ENCODE measurements at regions of chr12 and their contacts with region 1.

Region 1: GRCh38 chr12:94101738-94102660 is 46.4 kb upstream of the PLXNC1 start:
- DNase-seq: peak; percentile 74 to 93
- ATAC-seq: peak; percentile 89 to 90 (median 89)
- H3K4me3 ChIP-seq: peak overlapping the region; percentile 84
- H3K4me3 Mint-ChIP-seq: peak overlapping the region; percentile 88
- H3K27ac ChIP-seq: peak overlapping the region; percentile 21
- H3K27ac Mint-ChIP-seq: peak overlapping the region in 1 of 2 donors; percentile 69
- H3K4me1 ChIP-seq: peaks cover 15% of the 10 kb centered on the region
- H3K4me1 Mint-ChIP-seq: peaks cover 5% of the 10 kb centered on the region in 2 donors
- H3K27me3 ChIP-seq: peaks cover 3% of the 10 kb centered on the region
- H3K27me3 Mint-ChIP-seq: peaks cover 8 to 31% of the 10 kb centered on the region in 2 donors
- CTCF ChIP-seq: peak; percentile 67

Region 2: DNA sequence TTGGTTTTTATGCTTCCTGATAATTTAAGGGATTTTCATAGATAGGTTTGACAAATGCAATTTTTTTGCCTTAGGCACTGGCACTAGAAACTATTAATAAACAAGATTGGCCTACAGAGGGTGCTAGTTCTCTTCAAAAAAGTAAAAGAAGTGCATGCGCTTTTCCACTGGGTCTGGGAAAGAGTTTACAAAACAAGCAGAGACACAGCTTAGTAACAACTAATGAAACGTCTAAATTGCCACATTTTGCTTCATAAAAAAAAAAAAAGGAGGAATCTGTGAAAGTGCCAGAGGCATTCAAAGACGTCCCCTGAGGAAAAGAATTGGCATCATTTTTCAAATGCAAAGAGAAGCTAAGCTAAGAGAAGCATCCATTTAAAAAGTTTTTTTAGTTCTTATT is 1114.6 kb before region 1 on chr12:
- intact Hi-C with region 1: loop called (anchors 5 kb)
- DNase-seq: peak in 1 of 2 donors; percentile 72
- ATAC-seq: peak; percentile 47 to 69 (median 61)
- H3K4me3 ChIP-seq: no peak overlapping the region
- H3K4me3 Mint-ChIP-seq: no peak overlapping the region
- H3K27ac ChIP-seq: no peak overlapping the region
- H3K27ac Mint-ChIP-seq: no peak overlapping the region
- H3K4me1 ChIP-seq: peaks cover 5% of the 10 kb centered on the region
- H3K4me1 Mint-ChIP-seq: peaks cover 0 to 4% of the 10 kb centered on the region in 2 donors
- H3K27me3 ChIP-seq: no peaks in the 10 kb centered on the region
- H3K27me3 Mint-ChIP-seq: peaks cover 6 to 16% of the 10 kb centered on the region in 2 donors
- CTCF ChIP-seq: peak; percentile 52

Region 3: GRCh38 chr12:93521225-93522080 is 580.5 kb before region 1 on chr12:
- intact Hi-C with region 1: loop called (anchors 5 kb)
- DNase-seq: peak in 1 of 2 donors; percentile 6
- ATAC-seq: peak; percentile 27 to 80 (median 46)
- H3K4me3 ChIP-seq: no peak overlapping the region
- H3K4me3 Mint-ChIP-seq: peak overlapping the region; percentile 17
- H3K27ac ChIP-seq: no peak overlapping the region
- H3K27ac Mint-ChIP-seq: peak overlapping the region in 1 of 2 donors; percentile 72
- H3K4me1 ChIP-seq: peaks cover 3% of the 10 kb centered on the region
- H3K4me1 Mint-ChIP-seq: peaks cover 5 to 8% of the 10 kb centered on the region in 2 donors
- H3K27me3 ChIP-seq: no peaks in the 10 kb centered on the region
- H3K27me3 Mint-ChIP-seq: no peaks in the 10 kb centered on the region
- CTCF ChIP-seq: no peak

Region 4: DNA sequence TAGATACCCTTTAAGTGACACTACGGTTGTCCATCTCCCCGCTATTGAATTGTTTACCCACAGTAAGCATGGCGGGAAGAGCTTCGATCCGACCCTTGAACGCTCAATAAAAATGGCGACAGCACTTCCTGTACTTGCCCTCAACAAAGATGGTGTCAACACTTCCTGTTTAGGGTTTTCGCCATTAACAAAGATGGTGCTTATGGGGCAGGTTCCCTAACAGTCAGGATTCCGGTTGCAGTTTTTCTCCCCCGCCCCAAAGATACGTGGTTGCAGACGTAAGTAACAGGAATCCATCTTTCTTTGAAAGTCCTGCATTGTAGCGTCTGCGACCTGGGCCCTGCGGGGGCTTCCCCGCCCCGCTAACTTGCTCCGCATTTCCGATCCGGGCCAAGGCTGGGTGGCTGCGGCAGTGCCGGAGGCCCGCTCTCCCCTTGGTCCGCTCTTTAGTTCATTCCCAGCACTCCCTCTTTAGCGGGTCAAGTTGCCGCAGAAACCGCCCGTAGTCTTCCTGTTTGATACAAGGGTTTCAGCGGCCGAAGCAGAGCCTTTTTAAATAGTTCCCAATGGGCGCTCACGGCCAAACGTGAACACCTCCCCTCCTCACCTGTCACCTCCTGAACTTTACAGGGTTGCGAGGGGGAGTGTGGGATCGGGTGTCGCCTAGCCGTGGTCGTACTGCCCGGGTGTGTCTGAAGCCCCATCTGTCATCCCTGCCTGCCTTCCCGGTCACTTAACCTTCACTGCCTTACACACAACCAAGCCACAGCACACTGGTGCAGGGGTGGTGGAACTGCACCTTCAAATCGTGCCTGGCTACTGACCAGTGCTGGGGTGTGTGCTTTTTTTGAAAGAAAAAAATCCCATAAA is 424.6 kb before region 1 on chr12 and contains the start of gene CRADD:
- intact Hi-C with region 1: loop called (anchors 2 kb)
- DNase-seq: peak; percentile 80 to 99
- ATAC-seq: peak; percentile 91 to 98 (median 93)
- H3K4me3 ChIP-seq: peak within 1 kb of the TSS; percentile 90
- H3K4me3 Mint-ChIP-seq: peak within 1 kb of the TSS; percentile 97
- H3K27ac ChIP-seq: peak within 1 kb of the TSS; percentile 98
- H3K27ac Mint-ChIP-seq: peak within 1 kb of the TSS; percentile 99 to 100
- H3K4me1 ChIP-seq: peaks cover 12% of the 10 kb centered on the region
- H3K4me1 Mint-ChIP-seq: peaks cover 33 to 46% of the 10 kb centered on the region in 2 donors
- H3K27me3 ChIP-seq: no peaks in the 10 kb centered on the region
- H3K27me3 Mint-ChIP-seq: no peaks in the 10 kb centered on the region
- CTCF ChIP-seq: no peak
- total RNA-seq, gene CRADD: 19.1 to 27.5 (median 26.4) TPM

Region 5: GRCh38 chr12:93766796-93767523 is 335.0 kb before region 1 on chr12:
- intact Hi-C with region 1: loop called (anchors 1 kb)
- DNase-seq: peak in 1 of 2 donors; percentile 67
- ATAC-seq: peak; percentile 71 to 84 (median 76)
- H3K4me3 ChIP-seq: no peak overlapping the region
- H3K4me3 Mint-ChIP-seq: peak overlapping the region; percentile 11
- H3K27ac ChIP-seq: peak overlapping the region; percentile 43
- H3K27ac Mint-ChIP-seq: peak overlapping the region; percentile 57 to 76
- H3K4me1 ChIP-seq: peaks cover 2% of the 10 kb centered on the region
- H3K4me1 Mint-ChIP-seq: peaks cover 29 to 38% of the 10 kb centered on the region in 2 donors
- H3K27me3 ChIP-seq: no peaks in the 10 kb centered on the region
- H3K27me3 Mint-ChIP-seq: no peaks in the 10 kb centered on the region
- CTCF ChIP-seq: peak; percentile 66

Region 6: DNA sequence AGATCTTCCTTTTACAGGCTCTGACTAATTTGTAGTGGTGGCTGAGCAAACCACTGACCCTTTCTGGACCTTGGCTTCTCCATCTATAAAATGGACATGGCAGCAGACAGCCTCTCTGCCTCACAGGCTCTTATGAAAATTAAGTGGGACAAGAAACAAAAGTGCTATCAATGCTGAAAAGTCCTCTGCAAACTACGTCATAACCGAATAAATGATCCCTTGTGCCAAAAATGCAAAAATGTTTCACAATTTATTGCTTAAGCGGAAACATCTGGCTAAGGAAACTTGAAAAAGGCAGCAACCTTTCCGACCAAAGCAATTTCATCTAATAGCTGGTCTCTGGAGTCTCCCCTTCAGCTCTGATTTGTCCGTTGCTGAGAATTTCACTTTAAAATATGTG is 62.1 kb before region 1 on chr12:
- intact Hi-C with region 1: no loop called
- DNase-seq: no peak
- ATAC-seq: no peak
- H3K4me3 ChIP-seq: no peak overlapping the region
- H3K4me3 Mint-ChIP-seq: no peak overlapping the region
- H3K27ac ChIP-seq: no peak overlapping the region
- H3K27ac Mint-ChIP-seq: no peak overlapping the region
- H3K4me1 ChIP-seq: no peaks in the 10 kb centered on the region
- H3K4me1 Mint-ChIP-seq: no peaks in the 10 kb centered on the region
- H3K27me3 ChIP-seq: no peaks in the 10 kb centered on the region
- H3K27me3 Mint-ChIP-seq: peaks cover 3 to 7% of the 10 kb centered on the region in 2 donors
- CTCF ChIP-seq: no peak